ENCODE measurements at regions of chr3 and their contacts with region 1.

Region 1: DNA sequence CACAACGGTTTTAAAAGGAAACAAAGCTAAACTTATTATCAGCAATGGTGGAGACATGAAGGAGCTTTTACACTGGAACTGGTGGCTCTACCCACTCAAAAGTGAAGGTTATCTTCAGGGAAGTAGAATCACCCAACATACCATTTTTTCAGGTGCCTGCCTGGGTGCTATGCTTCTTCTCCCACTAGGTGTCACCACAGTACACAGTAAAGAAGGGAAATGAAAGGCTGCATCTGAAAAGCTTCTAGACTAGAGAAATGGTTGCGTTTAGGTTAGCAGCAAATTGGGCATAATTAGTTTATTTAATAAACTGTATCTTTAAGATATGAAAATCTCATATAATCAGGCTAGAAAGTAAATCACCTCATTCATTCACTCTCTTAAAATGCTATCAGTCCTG is 47.0 kb upstream of the SELENOK start:
- DNase-seq: no peak
- ATAC-seq: peak in 3 of 8 donors; percentile 38 to 70 (median 58)
- H3K4me3 ChIP-seq: no peak overlapping the region
- H3K27ac ChIP-seq: no peak overlapping the region
- H3K4me1 ChIP-seq: peaks cover 0 to 5% (median 0%) of the 10 kb centered on the region in 9 donors
- H3K27me3 ChIP-seq: peaks cover 0 to 31% (median 26%) of the 10 kb centered on the region in 7 donors
- CTCF ChIP-seq: peak; percentile 42 to 87 (median 74)

Region 2: DNA sequence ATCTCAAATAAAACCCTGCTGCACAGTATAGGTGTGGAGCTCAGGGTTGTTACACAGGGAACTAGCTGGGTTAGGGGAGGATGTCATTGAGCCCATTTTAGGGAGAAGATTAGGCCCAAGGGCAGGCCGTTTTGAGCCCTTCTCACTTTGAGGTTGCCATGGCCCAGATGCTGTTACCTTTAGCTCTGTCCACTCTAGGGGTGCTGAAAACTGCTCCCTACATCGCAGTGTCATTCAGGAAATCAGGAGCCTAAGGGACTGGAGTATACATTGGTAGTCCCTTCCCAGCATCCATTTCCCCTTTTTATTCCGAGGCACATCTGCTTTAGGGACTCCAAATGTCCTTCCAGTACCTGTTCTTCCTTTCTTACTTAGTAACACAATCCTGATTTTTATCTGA is 32.0 kb after region 1 on chr3:
- intact Hi-C with region 1: no loop called
- DNase-seq: no peak
- ATAC-seq: no peak
- H3K4me3 ChIP-seq: no peak overlapping the region
- H3K27ac ChIP-seq: no peak overlapping the region
- H3K4me1 ChIP-seq: no peaks in the 10 kb centered on the region
- H3K27me3 ChIP-seq: no peaks in the 10 kb centered on the region
- CTCF ChIP-seq: no peak

Region 3: DNA sequence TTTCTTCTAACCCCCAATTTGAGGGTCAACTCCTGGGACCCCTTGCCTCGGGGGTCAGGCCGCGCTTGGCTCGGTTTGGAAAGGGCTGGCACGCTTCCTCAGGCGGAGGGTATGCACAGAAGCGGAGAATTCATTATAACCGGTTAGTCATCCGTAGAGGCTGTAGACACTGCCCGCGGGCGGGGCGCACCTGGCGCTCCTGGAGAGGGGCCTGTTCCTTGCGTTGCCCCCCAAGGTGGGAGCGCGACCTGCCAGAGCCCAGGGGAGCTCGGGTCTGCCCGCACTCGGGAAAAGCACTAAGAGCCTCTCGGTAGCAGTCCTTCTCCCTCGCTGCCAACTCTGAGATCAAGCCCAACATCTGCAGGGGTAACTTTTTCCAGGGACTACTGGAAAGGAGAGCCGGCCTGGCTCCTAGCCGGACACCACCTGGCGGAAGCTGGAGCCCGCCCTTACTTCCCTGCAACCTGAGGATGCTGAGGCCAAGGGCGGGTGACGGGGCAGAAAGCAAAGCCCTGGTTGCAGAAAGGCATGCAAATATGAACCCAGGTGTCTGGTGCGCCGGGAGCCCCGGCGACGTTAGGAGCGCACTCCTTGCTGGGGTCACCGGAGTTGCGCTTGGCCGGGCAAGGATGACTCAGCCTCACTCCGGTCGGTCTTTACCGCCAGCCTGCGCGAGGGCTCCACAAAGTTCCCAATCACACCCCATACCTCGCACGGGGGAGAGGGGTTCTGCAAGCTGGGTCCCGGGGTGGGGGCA is 182.2 kb after region 1 on chr3:
- intact Hi-C with region 1: loop called in 2 of 10 experiments (anchors 10 kb)
- DNase-seq: peak in 1 of 2 donors; percentile 17
- ATAC-seq: peak in 4 of 8 donors; percentile 34 to 51 (median 44)
- H3K4me3 ChIP-seq: peak overlapping the region; percentile 38 to 70 (median 60)
- H3K27ac ChIP-seq: no peak overlapping the region
- H3K4me1 ChIP-seq: peaks cover 2 to 15% (median 11%) of the 10 kb centered on the region in 9 donors
- H3K27me3 ChIP-seq: peaks cover 0 to 70% (median 34%) of the 10 kb centered on the region in 7 donors
- CTCF ChIP-seq: no peak

Region 4: GRCh38 chr3:54146506-54147239 is 208.0 kb after region 1 on chr3:
- intact Hi-C with region 1: loop called in 1 of 10 experiments (anchors 10 kb)
- DNase-seq: peak; percentile 31 to 63
- ATAC-seq: peak; percentile 82 to 93 (median 92)
- H3K4me3 ChIP-seq: no peak overlapping the region
- H3K27ac ChIP-seq: no peak overlapping the region
- H3K4me1 ChIP-seq: peaks cover 0 to 15% (median 0%) of the 10 kb centered on the region in 9 donors
- H3K27me3 ChIP-seq: no peaks in the 10 kb centered on the region
- CTCF ChIP-seq: peak; percentile 42 to 76 (median 70)

Region 5: GRCh38 chr3:54270816-54271517 is 332.3 kb after region 1 on chr3:
- intact Hi-C with region 1: loop called in 1 of 10 experiments (anchors 5 kb)
- DNase-seq: no peak
- ATAC-seq: no peak
- H3K4me3 ChIP-seq: no peak overlapping the region
- H3K27ac ChIP-seq: no peak overlapping the region
- H3K4me1 ChIP-seq: no peaks in the 10 kb centered on the region
- H3K27me3 ChIP-seq: no peaks in the 10 kb centered on the region
- CTCF ChIP-seq: no peak

Region 6: GRCh38 chr3:54356261-54357045 is 417.8 kb after region 1 on chr3:
- intact Hi-C with region 1: loop called in 2 of 10 experiments (anchors 10 kb)
- DNase-seq: peak in 1 of 2 donors; percentile 56
- ATAC-seq: peak; percentile 58 to 91 (median 84)
- H3K4me3 ChIP-seq: no peak overlapping the region
- H3K27ac ChIP-seq: peak overlapping the region in 8 of 10 donors; percentile 13 to 66 (median 48)
- H3K4me1 ChIP-seq: peaks cover 0 to 66% (median 29%) of the 10 kb centered on the region in 9 donors
- H3K27me3 ChIP-seq: no peaks in the 10 kb centered on the region
- CTCF ChIP-seq: no peak

Region 7: GRCh38 chr3:54374214-54374855 is 435.7 kb after region 1 on chr3:
- intact Hi-C with region 1: loop called in 7 of 10 experiments (anchors 5 to 10 kb)
- DNase-seq: no peak
- ATAC-seq: peak in 3 of 8 donors; percentile 58 to 61 (median 58)
- H3K4me3 ChIP-seq: no peak overlapping the region
- H3K27ac ChIP-seq: no peak overlapping the region
- H3K4me1 ChIP-seq: peaks cover 0 to 14% (median 7%) of the 10 kb centered on the region in 9 donors
- H3K27me3 ChIP-seq: no peaks in the 10 kb centered on the region
- CTCF ChIP-seq: peak; percentile 11 to 61 (median 43)

Region 8: DNA sequence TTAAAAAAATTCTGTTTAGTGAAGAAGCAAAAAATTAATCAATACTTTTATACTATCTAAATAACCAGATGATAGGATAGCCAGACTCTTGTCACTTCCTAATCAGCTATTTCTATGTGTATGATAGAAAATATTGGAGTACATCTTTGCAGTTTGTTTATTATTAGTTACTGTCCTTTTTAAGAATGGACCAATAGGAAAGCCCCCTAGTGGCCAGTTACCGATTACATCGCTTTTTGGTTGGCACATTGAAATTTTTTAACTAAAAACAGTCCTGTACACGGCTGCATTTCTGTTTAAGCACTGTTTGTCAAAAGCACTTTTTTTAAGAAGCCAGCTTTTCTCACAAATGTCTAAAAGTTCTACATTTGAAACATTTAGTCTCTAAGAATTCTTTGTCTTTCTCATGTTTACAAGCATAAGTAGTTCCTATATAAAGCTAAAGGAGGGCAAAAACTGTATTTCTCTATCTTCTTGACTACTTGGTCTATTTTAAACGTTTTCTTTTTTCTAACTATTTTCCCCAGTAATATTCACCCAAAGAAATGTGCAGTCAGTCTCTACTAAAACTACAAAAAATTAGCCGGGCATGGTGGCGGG is 1242.4 kb after region 1 on chr3:
- intact Hi-C with region 1: loop called in 2 of 10 experiments (anchors 5 to 10 kb)
- DNase-seq: peak in 1 of 2 donors; percentile 36
- ATAC-seq: no peak
- H3K4me3 ChIP-seq: no peak overlapping the region
- H3K27ac ChIP-seq: no peak overlapping the region
- H3K4me1 ChIP-seq: no peaks in the 10 kb centered on the region
- H3K27me3 ChIP-seq: peaks cover 0 to 18% (median 11%) of the 10 kb centered on the region in 7 donors
- CTCF ChIP-seq: peak; percentile 57 to 83 (median 70)